Heart right ventricle (tissue), 16 donors: ENCODE measurements at regions of chr1 and their contacts with region 1.

Region 1: GRCh38 chr1:37931361-37932158 is 15.3 kb downstream of the INPP5B start:
- DNase-seq: peak; percentile 96 to 97
- ATAC-seq: peak; percentile 96 to 100 (median 99)
- H3K4me3 ChIP-seq: peak overlapping the region; percentile 34 to 91 (median 79)
- H3K27ac ChIP-seq: peak overlapping the region in 9 of 10 donors; percentile 51 to 84 (median 81)
- H3K4me1 ChIP-seq: peaks cover 0 to 49% (median 32%) of the 10 kb centered on the region in 9 donors
- H3K27me3 ChIP-seq: no peaks in the 10 kb centered on the region
- CTCF ChIP-seq: peak in 4 of 9 donors; percentile 6 to 38 (median 18)

Region 2: DNA sequence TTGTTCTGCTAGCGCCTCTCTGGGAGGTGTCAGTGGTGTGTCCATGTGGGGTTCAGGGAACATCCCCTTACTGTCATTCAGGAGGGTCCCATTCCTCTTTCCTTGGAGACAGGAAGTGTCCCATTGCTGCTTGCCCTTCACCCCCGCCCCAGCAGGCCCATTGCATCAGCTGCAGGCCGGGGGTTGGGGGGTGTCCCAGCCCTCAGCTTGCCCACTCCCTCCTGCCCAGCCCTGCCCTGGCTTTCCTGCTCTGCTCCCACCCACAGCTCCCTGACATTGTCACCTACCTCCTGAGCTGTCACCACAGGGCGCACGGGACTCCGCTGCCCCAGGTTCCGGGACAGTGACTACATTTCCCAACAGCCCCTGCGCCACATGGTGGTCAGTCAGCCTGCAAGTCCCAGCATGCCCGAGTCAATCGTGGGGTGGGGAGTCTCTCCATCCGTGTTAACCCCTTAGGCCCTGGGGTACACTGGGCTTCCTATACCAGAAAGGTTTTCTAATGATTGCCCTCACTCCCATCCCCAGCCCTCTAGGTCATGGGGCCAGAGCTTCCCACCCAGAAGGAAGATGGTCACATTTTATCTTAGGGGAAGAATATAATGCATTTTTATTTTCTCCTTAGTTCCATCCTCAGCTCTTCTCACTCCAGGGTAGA is 15.3 kb after region 1 on chr1 and contains the start of gene INPP5B:
- intact Hi-C with region 1: loop called in 1 of 10 experiments (anchors 2 kb)
- DNase-seq: peak; percentile 86 to 94
- ATAC-seq: peak; percentile 94 to 98 (median 96)
- H3K4me3 ChIP-seq: peak within 1 kb of the TSS; percentile 59 to 98 (median 80)
- H3K27ac ChIP-seq: peak within 1 kb of the TSS; percentile 78 to 97 (median 90)
- H3K4me1 ChIP-seq: peaks cover 5 to 30% (median 19%) of the 10 kb centered on the region in 9 donors
- H3K27me3 ChIP-seq: no peaks in the 10 kb centered on the region
- CTCF ChIP-seq: peak in 3 of 9 donors; percentile 4 to 27 (median 21)
- total RNA-seq, gene INPP5B: 8.7 to 16.7 (median 12.5) TPM